BJ (cell line): ENCODE measurements at regions of chr3 and their contacts with region 1.

Region 1: DNA sequence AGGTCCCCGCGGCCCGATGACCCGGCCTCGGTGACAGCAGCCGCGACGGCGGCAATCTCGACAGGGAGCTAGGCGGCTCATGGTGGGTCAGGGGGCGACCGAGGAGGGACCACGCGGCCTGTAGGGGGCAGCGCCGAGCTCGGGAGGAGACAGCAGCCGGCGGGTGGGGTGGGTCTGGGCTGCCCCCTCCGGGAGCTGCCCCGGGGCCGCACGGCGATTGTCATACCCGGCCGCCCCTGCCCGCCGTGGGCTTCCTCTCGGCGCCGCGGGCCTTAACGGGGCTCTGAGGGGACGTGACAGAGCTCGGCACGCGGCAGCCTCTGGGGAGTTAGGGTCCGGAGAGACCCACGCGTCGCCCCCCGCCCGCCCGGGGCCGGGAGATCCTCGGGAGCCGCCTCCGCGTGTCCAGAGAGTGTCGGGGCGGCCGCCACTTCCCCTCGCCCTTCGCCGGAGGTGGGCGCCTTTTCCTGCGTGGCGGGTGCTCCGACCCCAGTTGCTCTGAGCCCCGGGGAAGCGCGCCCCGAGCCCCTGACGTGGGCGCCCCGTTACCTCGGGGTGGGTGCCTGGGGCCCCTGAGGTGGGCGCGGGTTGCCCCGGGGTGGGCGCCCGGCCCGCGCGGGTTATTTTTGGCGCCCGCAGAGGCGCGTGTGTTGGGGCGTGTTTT is 539 bp upstream of the PLCL2 start:
- DNase-seq: no peak
- H3K4me3 ChIP-seq: peak overlapping the region; percentile 89
- H3K27me3 ChIP-seq: no peaks in the 10 kb centered on the region
- CTCF ChIP-seq: peak; percentile 70

Region 2: GRCh38 chr3:16869035-16870005 is 14.9 kb before region 1 on chr3:
- CTCF ChIA-PET with region 1: interaction called, 12 read pairs
- POLR2A ChIA-PET with region 1: no interaction called
- DNase-seq: no peak
- H3K4me3 ChIP-seq: no peak overlapping the region
- H3K27me3 ChIP-seq: no peaks in the 10 kb centered on the region
- CTCF ChIP-seq: no peak

Region 3: GRCh38 chr3:18679238-18679637 is 1795.0 kb after region 1 on chr3:
- CTCF ChIA-PET with region 1: no interaction called
- POLR2A ChIA-PET with region 1: no interaction called
- DNase-seq: no peak
- H3K4me3 ChIP-seq: no peak overlapping the region
- H3K27me3 ChIP-seq: no peaks in the 10 kb centered on the region
- CTCF ChIP-seq: no peak